ENCODE measurements at regions of chr4 and their contacts with region 1.

Region 1: DNA sequence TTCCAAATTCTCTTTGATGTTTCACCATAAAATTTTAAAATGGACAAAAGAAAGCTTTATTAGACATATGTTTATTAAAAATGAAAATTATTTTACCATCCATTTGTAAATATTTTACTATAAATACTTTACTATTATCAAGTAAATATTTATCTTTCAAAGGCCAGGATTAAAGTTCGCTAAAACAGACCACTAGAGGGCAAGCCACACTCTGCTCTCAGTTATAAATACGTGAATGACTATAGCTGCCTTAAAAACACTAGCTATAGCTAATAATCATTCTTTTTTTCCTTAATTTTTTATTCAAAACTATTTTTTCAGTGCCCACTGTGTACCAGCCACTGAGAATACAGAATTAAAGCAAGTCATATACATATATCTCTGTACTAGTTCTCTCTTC is 38.6 kb downstream of the UNC5C start:
- DNase-seq: peak; percentile 22
- H3K4me3 ChIP-seq: peak overlapping the region in 1 of 3 experiments; percentile 20
- H3K27ac ChIP-seq: peak overlapping the region; percentile 4
- H3K4me1 ChIP-seq: peaks cover 39% of the 10 kb centered on the region
- H3K27me3 ChIP-seq: no peaks in the 10 kb centered on the region
- CTCF ChIP-seq: peak; percentile 70 to 75

Region 2: DNA sequence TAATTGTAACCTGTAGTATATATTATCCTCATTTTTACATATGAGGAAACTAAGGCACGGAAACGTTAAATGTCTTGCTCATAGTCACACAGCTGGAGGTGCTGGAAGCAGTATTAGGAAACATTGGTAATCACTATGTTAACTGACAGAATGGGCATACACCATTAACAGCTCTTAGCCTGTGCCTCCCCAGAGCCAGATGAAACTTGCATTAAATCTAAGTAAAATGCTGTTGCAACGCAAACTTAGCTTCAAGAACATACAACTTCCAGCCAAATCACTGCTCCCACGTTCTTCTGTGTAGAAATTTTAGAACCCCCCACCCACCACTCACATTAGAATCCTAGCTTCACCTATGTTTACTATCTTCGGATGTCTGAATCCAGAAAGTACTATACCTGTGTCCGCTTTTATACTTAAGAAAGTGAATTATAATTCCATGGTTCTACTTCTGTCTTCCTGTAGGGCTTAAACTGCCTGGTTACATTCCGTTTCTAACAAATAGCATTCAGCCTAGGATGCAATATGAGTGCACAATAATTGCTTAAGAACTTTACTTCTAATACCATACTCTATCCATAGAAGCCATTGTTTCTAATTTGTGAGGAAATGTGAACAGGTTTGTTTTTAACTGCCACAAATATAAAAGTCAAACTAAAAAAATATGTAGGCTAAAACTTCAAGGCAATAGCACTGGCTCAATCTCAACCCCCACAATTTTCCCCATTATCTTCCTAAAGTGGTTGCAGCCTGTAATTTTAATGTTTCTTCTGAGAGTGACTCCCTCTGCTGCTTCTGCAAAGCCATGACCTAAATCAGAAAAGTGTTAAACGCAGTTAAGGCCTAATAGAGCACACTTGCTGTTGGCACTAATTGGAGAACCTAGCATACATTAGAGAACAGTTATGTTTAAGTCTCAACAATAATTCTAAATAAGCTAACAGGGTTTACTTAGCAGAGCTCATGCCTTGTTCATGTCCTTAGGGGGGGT is 34.3 kb after region 1 on chr4:
- CTCF ChIA-PET with region 1: interaction called, 5 read pairs
- dilution Hi-C with region 1: no loop called
- in situ Hi-C with region 1: no loop called
- intact Hi-C with region 1: loop called (anchors 1 kb)
- DNase-seq: peak; percentile 51
- H3K4me3 ChIP-seq: peak overlapping the region in 1 of 3 experiments; percentile 51
- H3K27ac ChIP-seq: peak overlapping the region; percentile 15
- H3K4me1 ChIP-seq: peaks cover 1% of the 10 kb centered on the region
- H3K27me3 ChIP-seq: peaks cover 19% of the 10 kb centered on the region
- CTCF ChIP-seq: peak; percentile 11 to 45

Region 3: GRCh38 chr4:96352051-96352517 is 841.9 kb after region 1 on chr4:
- CTCF ChIA-PET with region 1: no interaction called
- dilution Hi-C with region 1: no loop called
- in situ Hi-C with region 1: no loop called
- intact Hi-C with region 1: loop called (anchors 2 kb)
- DNase-seq: peak; percentile 14
- H3K4me3 ChIP-seq: no peak overlapping the region
- H3K27ac ChIP-seq: no peak overlapping the region
- H3K4me1 ChIP-seq: peaks cover 6% of the 10 kb centered on the region
- H3K27me3 ChIP-seq: peaks cover 2% of the 10 kb centered on the region
- CTCF ChIP-seq: peak; percentile 14 to 50

Measured in mammary epithelial cell (primary cell).